ENCODE measurements at regions of chr11 and their contacts with region 1.

Region 1: GRCh38 chr11:1694064-1694845 is 2.7 kb upstream of the KRTAP5-6 start:
- DNase-seq: peak; percentile 82
- H3K27ac ChIP-seq: peak overlapping the region; percentile 76
- CTCF ChIP-seq: peak; percentile 77

Region 2: DNA sequence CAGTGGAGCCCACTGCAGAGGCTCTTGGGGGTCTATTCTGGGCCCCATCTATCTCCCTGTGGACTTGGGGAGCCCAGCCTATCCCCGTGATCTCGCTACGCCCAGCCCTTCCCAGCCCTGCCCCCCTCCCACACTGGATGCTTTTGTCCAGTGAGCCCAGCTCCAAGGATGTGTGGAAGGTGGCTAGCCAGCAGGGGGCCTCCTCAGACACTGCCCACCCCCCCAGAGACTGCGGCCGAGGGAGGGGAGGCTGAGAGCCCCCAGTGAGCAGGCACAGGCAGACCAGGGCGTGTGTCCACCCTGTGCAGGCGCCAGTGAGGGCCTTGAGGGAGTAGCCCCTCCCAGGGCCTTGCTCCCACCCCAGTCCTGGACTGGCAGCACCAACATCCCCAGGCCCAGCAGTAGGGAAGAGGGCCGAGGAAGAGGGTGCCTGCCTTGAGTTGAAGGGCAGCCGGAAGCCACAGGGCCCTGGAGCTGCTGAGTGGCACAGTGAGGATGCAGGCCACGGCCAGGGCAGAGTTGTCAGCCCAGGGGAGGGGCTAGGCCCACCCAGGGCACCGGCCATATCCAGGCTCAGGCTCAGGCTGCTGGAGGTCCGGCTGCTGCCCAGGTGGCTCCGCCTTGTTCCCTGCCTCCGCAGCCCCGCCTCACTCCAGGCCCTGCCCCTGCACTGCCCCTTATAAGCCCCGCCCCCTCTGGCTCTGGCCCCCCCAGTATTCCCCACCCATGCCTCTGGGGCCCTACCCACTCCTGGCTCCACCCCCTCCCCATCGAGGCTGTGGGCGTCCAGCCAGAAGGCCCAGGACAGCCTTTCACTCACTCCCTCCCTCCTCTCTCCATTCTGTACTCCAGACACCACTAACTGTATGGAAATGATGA is 235.7 kb before region 1 on chr11:
- CTCF ChIA-PET with region 1: no interaction called
- POLR2A ChIA-PET with region 1: no interaction called
- DNase-seq: peak; percentile 52
- H3K27ac ChIP-seq: no peak overlapping the region; the same call in 1 of the 2 replicates
- CTCF ChIP-seq: no peak

Region 3: DNA sequence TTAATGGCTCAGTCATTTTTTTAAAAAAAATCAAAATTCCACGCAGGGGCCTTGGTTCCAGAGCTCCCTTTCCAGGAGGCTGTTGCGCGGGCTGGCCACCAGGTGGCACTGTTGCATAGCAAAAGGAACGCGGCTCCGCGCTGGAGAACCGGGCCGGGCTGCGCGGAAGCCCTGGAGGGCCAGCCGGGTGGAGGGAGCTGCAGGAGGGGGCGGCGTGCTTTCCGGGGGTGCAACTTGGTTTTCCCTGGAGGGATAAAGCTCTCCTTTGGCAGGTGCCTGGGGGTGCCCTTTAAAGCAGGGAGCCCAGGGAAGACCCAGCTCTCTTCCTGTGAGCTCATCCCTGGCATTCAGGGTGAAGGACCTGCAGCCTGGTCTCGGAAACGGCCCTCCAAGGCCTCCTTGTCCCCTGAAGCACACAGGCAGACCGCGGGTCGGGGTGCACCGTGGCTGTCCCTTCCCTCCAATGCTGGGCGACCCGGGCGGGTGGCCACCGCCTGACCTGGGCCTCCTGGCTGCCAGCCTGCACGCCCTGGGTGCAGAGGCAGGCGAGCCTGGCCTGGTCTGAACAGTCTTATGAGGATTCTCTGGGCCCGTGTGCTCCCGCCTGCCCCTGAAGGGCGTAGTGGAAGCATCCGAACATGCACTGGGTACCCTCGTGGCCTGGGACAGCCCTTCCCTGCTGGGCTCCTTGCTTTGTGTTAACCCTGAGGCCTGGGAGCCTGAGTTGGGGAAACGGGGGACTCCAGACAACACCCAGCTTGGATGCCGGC is 41.3 kb before region 1 on chr11:
- CTCF ChIA-PET with region 1: interaction called, 62 read pairs
- POLR2A ChIA-PET with region 1: no interaction called
- DNase-seq: peak; percentile 77
- H3K27ac ChIP-seq: no peak overlapping the region
- CTCF ChIP-seq: peak; percentile 91

Region 4: DNA sequence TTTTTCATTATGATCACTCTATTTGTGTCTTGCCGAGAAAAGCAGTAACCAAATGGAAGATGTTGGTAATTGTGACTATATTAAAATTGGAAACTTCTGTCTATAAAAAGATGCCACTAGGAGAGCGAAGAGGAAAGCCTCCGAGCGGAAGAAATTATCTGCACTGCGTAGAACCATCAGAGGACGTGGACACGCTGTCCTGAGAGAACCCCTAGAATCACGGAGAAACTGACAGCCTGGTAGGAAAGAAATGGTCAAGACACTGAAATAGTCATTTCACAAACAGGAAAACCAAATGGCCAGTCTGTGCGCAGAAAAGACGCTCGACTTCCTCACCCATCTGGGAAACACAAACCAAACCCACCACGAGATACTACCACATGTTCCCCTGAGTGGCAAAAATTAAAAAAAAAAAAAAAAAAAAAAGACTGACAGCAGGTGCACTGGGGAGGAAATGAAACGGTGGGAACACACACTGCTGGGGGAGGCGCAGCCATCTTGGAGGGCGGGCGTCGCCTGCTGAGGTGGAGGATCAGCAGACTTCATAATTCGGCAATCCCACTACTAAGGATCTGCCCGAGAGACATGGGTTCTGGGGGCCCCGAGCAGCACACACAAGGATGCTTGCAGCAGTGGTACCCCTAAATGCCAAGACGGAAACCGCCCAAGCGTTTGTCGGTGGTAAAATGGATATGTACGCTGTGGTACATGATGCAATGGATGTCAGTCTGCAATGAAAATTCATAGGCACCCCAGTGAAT is 34.9 kb after region 1 on chr11:
- CTCF ChIA-PET with region 1: no interaction called
- POLR2A ChIA-PET with region 1: no interaction called
- DNase-seq: no peak
- H3K27ac ChIP-seq: no peak overlapping the region
- CTCF ChIP-seq: no peak

Region 5: DNA sequence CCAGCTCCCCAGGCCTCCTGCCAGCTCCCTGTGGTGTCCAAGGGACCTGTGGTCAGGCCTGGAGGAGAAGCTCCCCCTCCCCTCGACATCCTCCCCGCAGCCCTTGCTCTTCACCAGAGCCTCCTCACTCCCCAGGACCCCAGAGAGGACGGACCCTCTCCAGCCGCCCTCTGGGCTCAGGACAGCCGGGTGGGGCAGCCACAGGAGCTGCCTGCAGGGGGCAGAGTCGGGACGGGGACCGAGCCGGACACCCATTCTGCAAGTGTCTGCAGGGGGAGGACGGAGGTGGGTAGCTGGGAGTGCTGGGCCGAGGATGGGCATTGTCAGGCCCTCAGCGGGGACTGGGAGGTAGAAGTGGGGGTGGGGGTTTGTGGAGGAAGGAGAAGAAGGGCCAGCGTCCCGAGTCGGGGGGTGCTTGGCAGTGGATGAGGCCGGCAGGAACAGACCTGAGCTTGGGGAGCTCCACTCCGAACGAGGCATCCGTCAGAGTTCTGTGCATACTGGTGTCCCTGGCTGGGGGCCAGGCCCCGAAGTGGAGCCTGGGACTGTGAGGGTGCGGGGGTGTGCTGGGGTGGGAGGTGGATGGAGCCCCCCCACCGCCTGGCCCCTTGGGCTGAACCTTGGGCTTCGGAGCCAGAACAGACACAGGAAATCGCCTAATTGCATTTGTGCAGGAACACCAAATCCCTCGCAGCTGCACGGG is 182.3 kb after region 1 on chr11:
- CTCF ChIA-PET with region 1: interaction called, 27 read pairs
- POLR2A ChIA-PET with region 1: no interaction called
- DNase-seq: peak; percentile 19
- H3K27ac ChIP-seq: peak overlapping the region; percentile 100
- CTCF ChIP-seq: peak; percentile 75

Region 6: DNA sequence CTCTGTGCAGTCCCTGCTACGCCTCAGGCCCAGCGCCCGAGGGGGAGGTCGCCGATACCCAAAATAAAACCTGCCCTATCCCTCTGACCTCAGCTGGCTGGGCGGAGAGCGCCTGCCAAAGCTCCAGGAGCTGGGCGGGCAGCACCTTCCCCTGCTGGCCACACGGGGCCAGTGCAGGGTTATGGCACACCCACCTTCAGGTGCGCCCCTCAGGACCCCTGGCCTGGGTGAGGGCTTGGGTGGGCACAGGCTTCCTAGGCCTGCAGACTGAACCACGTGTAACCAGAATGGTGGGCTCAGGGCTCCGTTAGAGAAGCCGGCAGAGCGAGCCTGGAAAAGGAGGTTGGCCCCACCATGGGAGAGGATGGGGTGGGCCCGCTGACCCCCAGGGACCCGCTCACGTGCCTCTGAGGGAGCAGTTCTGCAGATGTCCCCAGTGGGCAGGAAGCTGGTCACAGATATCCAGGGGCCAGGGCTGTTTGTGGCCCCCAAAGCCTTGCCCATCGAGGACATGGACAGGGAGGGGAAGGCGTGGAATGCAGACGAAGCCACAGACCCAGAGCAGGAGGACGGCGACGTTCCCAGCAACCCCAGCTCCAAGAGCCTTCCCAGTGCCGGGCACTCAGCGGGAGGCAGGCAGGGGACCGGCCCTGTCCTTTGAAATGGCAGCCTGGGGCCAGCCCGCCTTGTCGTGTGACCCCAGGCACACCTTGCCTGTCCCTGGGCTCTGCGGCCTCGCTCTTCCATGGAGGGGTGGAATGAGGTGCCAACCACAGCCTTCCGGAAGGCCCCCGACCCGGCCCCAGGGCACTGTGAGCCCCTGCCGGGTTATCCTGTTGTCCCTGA is 223.6 kb after region 1 on chr11:
- CTCF ChIA-PET with region 1: interaction called, 25 read pairs
- POLR2A ChIA-PET with region 1: no interaction called
- DNase-seq: no peak
- H3K27ac ChIP-seq: peak overlapping the region; percentile 76
- CTCF ChIP-seq: peak; percentile 33

Region 7: DNA sequence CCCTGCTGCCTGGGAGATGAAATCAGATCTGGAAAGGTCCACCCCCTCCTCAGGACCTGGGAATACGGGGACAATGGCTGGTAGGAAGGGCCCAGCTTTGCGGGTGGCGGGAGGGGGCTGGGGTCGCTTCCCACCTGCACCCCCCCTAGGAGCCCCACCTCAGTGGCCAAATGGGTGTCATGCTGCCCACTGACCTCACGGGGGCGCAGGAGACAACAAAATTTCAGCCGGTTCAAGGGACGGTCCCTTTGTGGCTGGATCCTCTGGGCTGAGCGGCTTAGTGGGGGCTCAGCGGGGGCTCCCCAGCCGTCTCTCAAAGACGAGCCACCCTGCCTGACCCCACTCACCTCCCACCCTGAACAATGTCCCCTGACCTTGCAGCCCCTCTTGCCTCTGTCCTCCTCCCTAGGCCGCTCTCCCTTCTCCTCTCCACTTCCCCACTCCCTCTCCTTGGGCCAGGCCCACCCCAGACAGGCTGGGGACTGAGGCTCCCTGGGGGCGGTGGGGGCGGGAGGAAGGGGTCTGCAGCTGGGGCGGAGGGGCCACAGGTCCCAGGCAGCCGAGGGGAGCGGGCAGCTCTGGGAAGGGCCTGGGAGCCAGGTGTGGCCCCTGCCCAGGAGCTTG is 342.7 kb after region 1 on chr11:
- CTCF ChIA-PET with region 1: interaction called, 14 read pairs
- POLR2A ChIA-PET with region 1: no interaction called
- DNase-seq: no peak
- H3K27ac ChIP-seq: no peak overlapping the region
- CTCF ChIP-seq: no peak

Measured in RWPE1 (cell line).